Activated naive CD4-positive, alpha-beta T cell treated with anti-CD3 and anti-CD28 coated beads for 36 hours (primary cell): ENCODE measurements at regions of chr4 and their contacts with region 1.

Region 1: GRCh38 chr4:48445704-48446103 is 37.4 kb upstream of the SLC10A4 start:
- DNase-seq: no peak
- H3K4me3 Mint-ChIP-seq: no peak overlapping the region
- H3K27ac Mint-ChIP-seq: no peak overlapping the region
- H3K4me1 Mint-ChIP-seq: no peaks in the 10 kb centered on the region
- H3K27me3 Mint-ChIP-seq: peaks cover 3% of the 10 kb centered on the region

Region 2: GRCh38 chr4:48546336-48546735 is 100.6 kb after region 1 on chr4:
- CTCF ChIA-PET with region 1: no interaction called
- intact Hi-C with region 1: loop called (anchors 1 kb)
- DNase-seq: peak; percentile 63
- H3K4me3 Mint-ChIP-seq: no peak overlapping the region
- H3K27ac Mint-ChIP-seq: no peak overlapping the region
- H3K4me1 Mint-ChIP-seq: no peaks in the 10 kb centered on the region
- H3K27me3 Mint-ChIP-seq: no peaks in the 10 kb centered on the region

Region 3: GRCh38 chr4:49000806-49001205 is 555.1 kb after region 1 on chr4:
- CTCF ChIA-PET with region 1: no interaction called
- intact Hi-C with region 1: no loop called
- DNase-seq: no peak
- H3K4me3 Mint-ChIP-seq: no peak overlapping the region
- H3K27ac Mint-ChIP-seq: no peak overlapping the region
- H3K4me1 Mint-ChIP-seq: no peaks in the 10 kb centered on the region
- H3K27me3 Mint-ChIP-seq: peaks cover 8% of the 10 kb centered on the region